Breast epithelium (tissue), 4 donors: ENCODE measurements at regions of chr2 and their contacts with region 1.

Region 1: DNA sequence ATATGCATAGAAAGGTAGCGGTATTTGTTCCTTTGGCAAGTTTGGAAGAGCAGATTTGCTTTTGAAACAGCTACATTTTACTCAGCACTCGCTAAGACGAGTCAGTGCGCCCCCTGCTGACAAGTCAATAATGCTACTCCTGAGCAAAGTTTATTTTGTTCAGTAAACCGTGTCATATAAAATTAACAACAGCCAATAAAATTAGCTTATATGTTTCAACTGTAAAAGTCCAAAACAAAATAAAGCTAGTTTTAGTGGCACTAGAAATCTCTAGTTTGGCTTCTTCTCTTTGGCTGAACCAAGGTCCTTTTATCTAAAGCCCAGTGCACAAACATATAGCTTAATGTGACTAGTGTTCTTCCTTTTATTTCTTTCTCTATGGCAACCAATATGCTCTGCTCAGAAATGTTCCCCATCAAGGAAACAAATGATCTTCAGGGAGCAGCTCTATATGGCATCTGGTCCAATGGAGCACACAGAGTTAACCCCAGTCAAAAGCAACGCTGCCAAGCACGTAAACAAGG is 4.2 kb upstream of the POU3F3 start:
- DNase-seq: no peak
- H3K4me3 ChIP-seq: no peak overlapping the region
- H3K27ac ChIP-seq: no peak overlapping the region
- H3K4me1 ChIP-seq: peaks cover 0 to 7% of the 10 kb centered on the region in 2 donors
- H3K27me3 ChIP-seq: peaks cover 12 to 98% of the 10 kb centered on the region in 2 donors
- CTCF ChIP-seq: peak in 2 of 3 donors; percentile 61 to 73
- POLR2A ChIP-seq: no peak

Region 2: DNA sequence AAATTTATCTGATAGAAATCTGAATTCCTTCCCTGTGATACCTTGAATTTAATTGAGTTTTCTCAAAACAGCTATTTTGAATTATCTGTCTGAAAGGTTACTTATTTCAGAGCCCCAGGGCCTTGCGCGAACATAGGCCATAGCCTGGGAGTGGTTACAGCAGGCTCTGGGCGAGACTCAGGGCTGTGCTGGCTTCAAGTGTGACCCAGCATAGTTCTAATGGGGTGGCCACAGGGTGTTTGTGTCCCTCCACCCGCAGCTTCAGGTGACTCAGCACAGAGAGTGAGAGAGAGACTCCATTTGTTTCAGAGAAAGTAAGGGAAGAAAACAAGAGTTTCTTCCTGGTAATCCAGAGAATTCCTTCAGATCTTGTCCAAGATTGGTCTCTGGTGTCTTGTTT is 133.6 kb before region 1 on chr2:
- intact Hi-C with region 1: no loop called
- DNase-seq: no peak
- H3K4me3 ChIP-seq: no peak overlapping the region
- H3K27ac ChIP-seq: no peak overlapping the region
- H3K4me1 ChIP-seq: no peaks in the 10 kb centered on the region
- H3K27me3 ChIP-seq: no peaks in the 10 kb centered on the region
- CTCF ChIP-seq: no peak
- POLR2A ChIP-seq: no peak

Region 3: GRCh38 chr2:104786821-104787220 is 62.9 kb before region 1 on chr2:
- intact Hi-C with region 1: loop called (anchors 2 kb)
- DNase-seq: no peak
- H3K4me3 ChIP-seq: no peak overlapping the region
- H3K27ac ChIP-seq: no peak overlapping the region
- H3K4me1 ChIP-seq: no peaks in the 10 kb centered on the region
- H3K27me3 ChIP-seq: peaks cover 0 to 5% of the 10 kb centered on the region in 2 donors
- CTCF ChIP-seq: no peak
- POLR2A ChIP-seq: no peak

Region 4: DNA sequence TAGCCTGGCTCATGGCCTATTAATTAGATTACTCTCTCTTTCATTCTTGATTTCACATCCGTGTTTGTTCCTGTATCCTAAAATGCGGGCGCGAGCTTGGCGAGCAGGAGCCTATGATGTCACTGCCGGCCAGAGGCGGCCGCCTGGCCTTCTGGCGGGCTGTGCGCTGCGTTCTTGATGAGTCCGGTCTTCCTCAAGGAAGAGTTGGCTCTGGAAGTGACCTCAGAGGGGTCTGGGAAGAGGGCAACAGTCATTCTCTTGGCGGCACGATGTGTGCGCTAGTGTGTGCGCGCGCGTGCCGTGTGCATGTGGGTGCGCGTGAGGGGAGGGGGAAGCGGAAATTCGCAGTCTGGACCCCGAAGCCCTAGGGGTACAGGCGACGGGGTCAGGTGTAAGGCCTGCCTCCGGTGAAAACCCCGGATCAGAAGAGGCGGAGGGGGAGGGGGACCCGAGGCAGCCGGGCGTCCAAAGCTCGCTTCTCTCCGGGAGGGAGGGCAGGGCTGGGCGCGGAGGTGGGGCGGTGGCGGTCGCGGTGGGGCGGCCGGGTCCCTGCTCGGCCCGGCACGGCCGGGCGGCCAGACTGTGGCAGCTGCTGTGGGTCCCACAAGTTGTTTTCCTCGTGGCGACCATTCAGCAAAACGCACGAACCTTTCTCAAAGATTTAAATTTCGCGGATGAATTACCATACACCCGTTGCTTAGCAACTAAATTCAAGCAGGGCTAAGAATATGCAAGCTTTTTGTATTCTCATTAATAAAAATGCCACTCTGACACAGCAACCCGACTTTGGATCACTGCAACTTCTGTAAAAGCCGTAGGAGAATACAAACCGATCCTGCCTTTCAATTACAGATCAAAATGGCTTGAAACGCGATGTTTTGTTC is 12.6 kb after region 1 on chr2:
- intact Hi-C with region 1: no loop called
- DNase-seq: no peak
- H3K4me3 ChIP-seq: peak overlapping the region in 2 of 3 donors; percentile 28 to 50
- H3K27ac ChIP-seq: no peak overlapping the region
- H3K4me1 ChIP-seq: no peaks in the 10 kb centered on the region
- H3K27me3 ChIP-seq: peaks cover 7 to 100% of the 10 kb centered on the region in 2 donors
- CTCF ChIP-seq: no peak
- POLR2A ChIP-seq: no peak